Thyroid gland (tissue), 4 donors: ENCODE measurements at regions of chrX and their contacts with region 1.

Region 1: DNA sequence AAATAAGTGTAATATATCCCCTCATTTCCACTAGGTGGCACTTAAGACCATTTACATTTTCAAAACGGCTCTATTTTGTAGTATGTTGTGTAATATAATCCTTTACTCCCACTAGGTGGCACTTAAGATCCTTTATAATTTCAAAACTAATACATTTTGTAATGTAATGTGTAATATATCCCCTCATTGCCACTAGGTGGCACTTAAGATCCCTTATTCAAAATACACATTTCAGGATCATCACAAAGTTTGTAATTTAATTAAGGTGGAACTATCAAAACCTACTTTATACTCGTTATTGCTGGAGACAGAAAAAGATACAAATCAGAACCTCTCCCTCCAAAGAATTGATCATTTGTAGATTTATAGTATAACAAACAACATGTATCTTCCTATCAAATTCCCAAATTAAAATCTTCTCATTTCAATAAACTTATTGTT is 132.5 kb downstream of the ARHGAP6 start:
- DNase-seq: no peak
- H3K4me3 ChIP-seq: no peak overlapping the region
- H3K27ac ChIP-seq: peak overlapping the region in 1 of 3 donors; percentile 45
- H3K4me1 ChIP-seq: peaks cover 0 to 6% of the 10 kb centered on the region in 2 donors
- H3K27me3 ChIP-seq: no peaks in the 10 kb centered on the region
- CTCF ChIP-seq: peak; percentile 14 to 91 (median 58)
- POLR2A ChIP-seq: no peak

Region 2: GRCh38 chrX:11143931-11144678 is 389.1 kb before region 1 on chrX:
- intact Hi-C with region 1: loop called (anchors 5 kb)
- DNase-seq: peak; percentile 49 to 50
- H3K4me3 ChIP-seq: no peak overlapping the region
- H3K27ac ChIP-seq: no peak overlapping the region
- H3K4me1 ChIP-seq: no peaks in the 10 kb centered on the region
- H3K27me3 ChIP-seq: no peaks in the 10 kb centered on the region
- CTCF ChIP-seq: peak; percentile 13 to 66 (median 51)
- POLR2A ChIP-seq: no peak

Region 3: GRCh38 chrX:11375614-11376119 is 157.6 kb before region 1 on chrX:
- intact Hi-C with region 1: loop called (anchors 10 kb)
- DNase-seq: no peak
- H3K4me3 ChIP-seq: no peak overlapping the region
- H3K27ac ChIP-seq: no peak overlapping the region
- H3K4me1 ChIP-seq: peaks cover 0 to 6% of the 10 kb centered on the region in 2 donors
- H3K27me3 ChIP-seq: no peaks in the 10 kb centered on the region
- CTCF ChIP-seq: no peak
- POLR2A ChIP-seq: no peak

Region 4: GRCh38 chrX:11704725-11705495 is 171.7 kb after region 1 on chrX:
- intact Hi-C with region 1: no loop called
- DNase-seq: no peak
- H3K4me3 ChIP-seq: no peak overlapping the region
- H3K27ac ChIP-seq: no peak overlapping the region
- H3K4me1 ChIP-seq: no peaks in the 10 kb centered on the region
- H3K27me3 ChIP-seq: no peaks in the 10 kb centered on the region
- CTCF ChIP-seq: no peak
- POLR2A ChIP-seq: no peak

Region 5: DNA sequence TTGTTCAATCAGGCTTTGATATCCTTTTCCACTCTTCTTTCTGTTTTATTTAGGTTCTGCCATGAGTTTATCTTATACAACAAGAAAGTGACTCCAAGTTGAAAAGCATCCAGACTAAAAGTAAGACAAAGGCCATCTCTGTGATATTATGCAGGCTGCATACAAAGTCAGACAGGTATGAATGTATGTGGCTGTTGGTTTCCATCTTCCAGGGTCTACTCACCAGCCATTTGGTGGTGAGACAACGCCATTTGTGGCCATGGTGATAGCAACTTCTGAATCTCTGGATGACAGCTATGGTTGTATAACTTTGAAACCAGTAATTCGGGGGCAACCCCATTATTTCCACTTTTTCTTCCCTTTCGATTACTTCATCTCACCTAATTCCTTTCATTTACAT is 207.6 kb after region 1 on chrX:
- intact Hi-C with region 1: no loop called
- DNase-seq: no peak
- H3K4me3 ChIP-seq: no peak overlapping the region
- H3K27ac ChIP-seq: no peak overlapping the region
- H3K4me1 ChIP-seq: no peaks in the 10 kb centered on the region
- H3K27me3 ChIP-seq: no peaks in the 10 kb centered on the region
- CTCF ChIP-seq: no peak
- POLR2A ChIP-seq: no peak

Region 6: DNA sequence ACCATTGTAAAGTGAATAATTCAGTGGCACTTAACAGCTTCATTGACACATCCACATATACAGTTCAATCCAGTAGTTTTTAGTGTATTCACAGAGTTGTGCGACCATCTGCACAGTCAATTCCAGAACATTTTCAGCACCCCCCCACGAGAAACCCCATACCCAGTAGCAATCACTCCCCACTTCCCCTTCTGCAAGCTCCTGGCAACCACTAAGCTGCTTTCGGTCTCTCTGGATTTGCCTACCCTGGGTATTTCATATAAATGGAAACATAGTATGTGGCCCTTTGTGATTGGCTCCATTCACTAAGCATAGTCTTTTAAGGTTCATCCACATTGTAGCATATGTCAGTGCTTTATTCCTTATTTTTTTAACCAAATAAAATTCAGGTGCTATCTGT is 234.8 kb after region 1 on chrX:
- intact Hi-C with region 1: loop called (anchors 5 kb)
- DNase-seq: no peak
- H3K4me3 ChIP-seq: no peak overlapping the region
- H3K27ac ChIP-seq: no peak overlapping the region
- H3K4me1 ChIP-seq: no peaks in the 10 kb centered on the region
- H3K27me3 ChIP-seq: no peaks in the 10 kb centered on the region
- CTCF ChIP-seq: no peak
- POLR2A ChIP-seq: no peak